ENCODE measurements at regions of chr7 and their contacts with region 1.

Region 1: DNA sequence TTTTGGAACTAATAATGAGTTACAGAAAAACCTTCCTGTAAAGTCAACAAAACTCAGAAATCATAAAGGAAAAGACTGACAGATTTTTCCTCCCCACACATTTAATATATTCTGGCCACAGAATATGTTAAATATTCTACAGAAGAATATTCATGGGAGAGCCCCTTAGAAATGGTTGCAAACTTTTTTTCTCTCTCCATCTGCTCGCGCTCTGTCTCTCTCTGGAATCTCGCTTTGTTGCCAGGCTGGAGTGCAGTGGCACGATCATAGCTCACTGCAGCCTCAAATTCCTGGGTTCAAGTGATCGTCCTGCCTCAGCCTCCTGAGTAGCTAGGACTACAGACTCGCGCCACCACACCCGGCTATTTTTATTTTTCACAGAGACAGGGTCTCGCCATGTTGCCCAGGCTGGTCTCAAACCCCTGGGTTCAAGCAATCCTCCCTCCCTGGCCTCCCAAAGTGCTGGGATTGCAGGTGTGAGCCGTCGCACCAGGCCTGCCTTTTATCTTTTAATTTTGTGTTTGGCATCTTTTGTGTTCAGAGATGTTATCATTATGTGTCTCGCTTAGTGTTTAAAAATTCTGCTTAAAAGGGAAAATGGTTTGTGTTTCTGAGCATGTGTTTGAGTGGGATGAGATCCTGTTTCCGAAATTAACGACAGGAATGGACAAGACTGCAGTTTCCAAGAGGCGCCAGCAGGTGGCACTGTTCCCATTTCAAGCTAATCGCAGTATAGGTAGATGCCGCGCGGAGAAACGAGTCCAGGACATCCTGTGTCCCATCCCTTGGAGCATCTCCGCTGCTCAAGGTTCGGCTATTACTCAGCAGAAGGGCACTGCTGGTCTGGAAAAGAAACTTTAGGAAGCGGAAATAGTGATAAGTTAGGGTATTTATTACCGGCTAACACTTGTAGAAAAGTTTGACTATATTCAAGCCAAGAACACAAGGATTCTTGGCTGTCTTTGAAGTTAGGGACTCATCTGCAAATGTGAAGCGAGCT is 23.1 kb upstream of the ST7 start:
- DNase-seq: peak; percentile 82 to 87
- ATAC-seq: peak; percentile 84 to 93 (median 92)
- H3K4me3 ChIP-seq: no peak overlapping the region
- H3K27ac ChIP-seq: no peak overlapping the region
- H3K4me1 ChIP-seq: peaks cover 2% of the 10 kb centered on the region
- H3K27me3 ChIP-seq: no peaks in the 10 kb centered on the region
- CTCF ChIP-seq: peak; percentile 94

Region 2: DNA sequence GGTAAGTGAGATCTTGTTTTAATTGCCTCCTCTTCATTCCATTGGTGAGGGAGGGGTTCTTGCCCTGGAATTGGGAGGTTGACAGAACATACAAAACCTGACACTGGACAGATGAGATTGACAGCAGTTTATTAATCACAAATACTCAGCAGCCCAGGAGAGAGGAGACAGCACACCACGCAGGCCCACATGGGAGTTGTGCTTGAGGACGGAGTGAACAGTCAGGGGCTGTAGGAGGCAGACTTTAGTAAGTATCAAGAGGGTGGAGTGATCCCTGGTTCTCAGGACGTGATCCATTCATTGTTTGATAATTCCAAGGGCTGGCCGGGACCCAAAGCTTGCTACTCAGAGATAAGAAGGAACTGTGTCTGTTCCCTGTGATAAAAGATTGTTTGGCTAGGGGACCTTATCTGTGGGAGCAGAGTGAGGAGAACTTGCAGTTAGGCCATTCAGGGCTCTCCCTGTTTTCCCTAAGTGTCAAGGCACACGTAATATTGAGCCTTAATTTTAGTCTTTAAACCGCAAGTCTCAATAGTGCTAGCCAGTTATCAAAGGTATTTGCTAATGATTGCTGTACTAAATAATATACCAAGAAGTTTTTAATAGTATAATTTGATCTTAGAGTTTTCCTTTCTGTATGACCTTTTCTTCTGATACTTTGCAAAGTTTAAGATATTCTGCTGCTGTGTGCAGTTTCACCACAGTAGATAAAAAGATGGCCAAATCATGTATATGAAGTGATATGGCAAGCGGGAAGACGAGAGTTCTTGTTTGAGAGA is 53.4 kb before region 1 on chr7:
- intact Hi-C with region 1: no loop called
- DNase-seq: peak in 1 of 2 donors; percentile 27
- ATAC-seq: peak in 3 of 4 donors; percentile 43 to 63 (median 51)
- H3K4me3 ChIP-seq: peak overlapping the region; percentile 12
- H3K27ac ChIP-seq: peak overlapping the region; percentile 27
- H3K4me1 ChIP-seq: peaks cover 53% of the 10 kb centered on the region
- H3K27me3 ChIP-seq: no peaks in the 10 kb centered on the region
- CTCF ChIP-seq: peak; percentile 9

Region 3: GRCh38 chr7:116984917-116985316 is 54.7 kb after region 1 on chr7:
- intact Hi-C with region 1: loop called (anchors 5 to 10 kb)
- DNase-seq: no peak
- ATAC-seq: peak in 2 of 4 donors; percentile 63 to 72
- H3K4me3 ChIP-seq: no peak overlapping the region
- H3K27ac ChIP-seq: no peak overlapping the region
- H3K4me1 ChIP-seq: peaks cover 10% of the 10 kb centered on the region
- H3K27me3 ChIP-seq: no peaks in the 10 kb centered on the region
- CTCF ChIP-seq: peak; percentile 76

Region 4: DNA sequence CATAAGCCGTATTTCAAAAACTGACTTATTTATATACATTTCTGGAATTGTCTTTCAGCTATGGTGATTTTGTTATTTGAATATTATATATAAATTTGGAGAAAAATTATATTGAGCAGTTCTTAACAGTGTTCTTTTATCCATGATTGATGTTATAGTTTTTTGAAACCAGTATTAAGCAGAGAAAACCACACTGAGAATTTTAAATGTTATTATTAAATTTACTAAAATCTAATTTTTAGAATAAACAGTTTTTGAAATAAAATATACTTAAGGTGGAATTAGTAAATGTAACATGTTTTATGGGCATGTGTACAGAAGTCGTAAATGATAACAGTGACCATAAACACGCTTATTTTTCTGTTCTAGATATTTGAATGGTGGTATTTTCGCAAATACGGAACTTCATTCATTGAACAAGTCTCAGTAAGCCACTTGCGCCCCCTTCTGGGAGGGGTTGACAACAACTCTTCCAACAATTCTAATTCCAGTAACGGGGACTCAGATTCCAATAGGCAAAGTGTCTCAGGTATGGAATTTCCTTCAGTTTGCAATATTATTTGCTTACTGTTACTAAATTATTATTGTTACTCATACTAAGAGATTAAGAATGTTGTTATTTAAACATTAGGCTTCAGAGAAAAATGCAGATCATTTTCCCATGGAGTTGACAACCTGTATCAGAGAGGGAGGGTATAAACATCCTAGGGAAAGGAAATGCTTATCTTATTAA is 189.1 kb after region 1 on chr7:
- intact Hi-C with region 1: loop called in 1 of 2 experiments (anchors 2 kb)
- DNase-seq: peak; percentile 77 to 86
- ATAC-seq: peak; percentile 50 to 82 (median 65)
- H3K4me3 ChIP-seq: no peak overlapping the region
- H3K27ac ChIP-seq: no peak overlapping the region
- H3K4me1 ChIP-seq: peaks cover 27% of the 10 kb centered on the region
- H3K27me3 ChIP-seq: no peaks in the 10 kb centered on the region
- CTCF ChIP-seq: peak; percentile 93

Region 5: DNA sequence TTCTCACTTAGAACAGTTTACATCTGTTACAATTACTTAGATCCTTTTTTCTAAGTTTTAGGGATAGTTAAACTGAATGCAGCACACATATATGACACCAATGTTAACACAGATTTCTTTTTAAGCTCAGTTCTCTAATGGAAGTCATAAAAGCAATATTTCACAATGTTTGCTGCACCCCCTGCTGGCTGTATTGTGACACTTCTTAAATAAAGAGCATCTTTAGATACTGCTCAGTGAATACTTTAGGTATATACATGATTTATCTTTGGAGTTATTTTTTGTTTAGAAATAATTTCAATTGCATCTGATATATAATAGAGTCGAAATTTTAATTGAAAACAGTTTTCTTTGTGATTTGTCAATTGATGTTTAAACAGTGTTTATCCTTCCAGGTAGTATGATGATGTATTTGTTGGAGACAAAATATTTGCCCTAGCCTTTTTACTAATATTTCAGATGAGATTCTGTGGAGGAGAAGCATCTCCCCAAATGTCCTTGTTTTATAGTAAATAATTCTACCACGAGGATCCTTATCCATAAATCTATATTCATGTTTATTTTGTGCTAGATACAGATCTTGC is 197.5 kb after region 1 on chr7:
- intact Hi-C with region 1: loop called in 1 of 2 experiments (anchors 2 kb)
- DNase-seq: peak in 1 of 2 donors; percentile 18
- ATAC-seq: peak in 3 of 4 donors; percentile 36 to 68 (median 45)
- H3K4me3 ChIP-seq: no peak overlapping the region
- H3K27ac ChIP-seq: no peak overlapping the region
- H3K4me1 ChIP-seq: peaks cover 36% of the 10 kb centered on the region
- H3K27me3 ChIP-seq: no peaks in the 10 kb centered on the region
- CTCF ChIP-seq: peak; percentile 81

Measured in psoas muscle (tissue), 8 donors.